Panc1 (cell line): ENCODE measurements at regions of chr10 and their contacts with region 1.

Region 1: DNA sequence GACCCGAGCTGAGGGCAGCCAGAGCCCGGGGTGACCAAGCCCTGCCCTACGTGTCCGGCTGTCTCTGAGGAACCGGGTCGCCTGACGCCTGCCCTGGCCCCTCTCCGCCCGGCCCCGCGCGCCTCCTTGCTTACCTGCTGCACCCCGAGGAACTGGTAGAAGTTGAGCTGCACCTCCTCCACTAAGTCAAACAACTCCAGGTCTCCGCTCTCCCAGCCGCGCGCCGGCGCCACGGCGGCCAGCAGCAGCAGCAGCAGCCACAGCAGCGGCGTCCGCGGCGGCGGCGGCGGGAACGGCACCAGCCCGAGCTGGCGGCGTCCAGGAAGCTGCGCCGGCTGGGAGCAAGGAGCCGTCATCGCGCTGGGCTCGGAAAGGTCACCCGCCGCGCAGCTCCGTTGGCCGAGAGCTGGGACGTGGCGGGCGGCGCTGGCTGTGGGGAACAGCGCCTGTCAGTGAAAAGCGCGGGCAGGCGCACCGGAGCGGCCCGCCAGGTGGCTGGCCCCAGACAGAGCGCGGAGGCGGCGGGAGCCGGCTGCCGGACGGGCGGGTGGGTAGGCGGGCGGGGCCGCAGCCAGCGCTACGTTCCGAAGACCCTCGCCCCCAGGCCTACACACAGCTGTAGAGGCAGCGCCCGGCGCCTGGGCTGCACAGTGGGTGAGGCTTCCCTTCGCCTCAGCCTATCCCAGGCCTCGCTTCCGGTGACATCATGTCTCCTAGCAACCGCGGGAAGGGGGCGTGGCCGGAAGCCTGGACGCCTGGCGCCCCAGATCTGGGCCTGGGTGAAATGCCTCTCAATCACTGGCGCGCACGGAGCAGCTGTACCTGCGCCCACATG is at the start of gene DNAJC1:
- DNase-seq: no peak
- ATAC-seq: peak; percentile 100
- H3K4me3 ChIP-seq: peak within 1 kb of the TSS; percentile 76 to 78
- H3K27ac ChIP-seq: peak within 1 kb of the TSS; percentile 89
- H3K4me1 ChIP-seq: peaks cover 6% of the 10 kb centered on the region; the same call in 1 of the 2 replicates
- H3K27me3 ChIP-seq: no peaks in the 10 kb centered on the region
- CTCF ChIP-seq: peak; percentile 9; the same call in 1 of the 2 replicates
- total RNA-seq, gene DNAJC1: 12.9 TPM

Region 2: DNA sequence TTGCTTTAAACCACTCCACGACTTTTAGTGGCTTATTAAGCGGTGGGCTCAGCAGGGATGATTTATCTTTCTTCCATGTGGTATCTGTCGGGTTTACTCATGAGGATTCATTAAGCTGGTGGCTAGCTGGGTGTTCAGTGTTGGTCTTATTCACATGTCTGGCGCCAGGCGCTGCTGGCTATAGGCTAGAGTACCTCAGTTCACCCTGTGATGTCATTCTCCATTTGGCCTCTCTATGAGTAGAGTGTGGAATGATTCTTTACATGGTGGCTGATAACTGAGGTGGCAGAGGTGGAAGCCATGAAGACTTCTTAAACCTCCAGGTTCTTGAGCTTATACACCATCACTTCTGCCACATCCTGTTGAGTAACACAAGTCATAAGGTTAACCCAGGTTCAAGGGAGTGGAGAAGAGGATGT is 353.8 kb before region 1 on chr10:
- CTCF ChIA-PET with region 1: no interaction called
- POLR2A ChIA-PET with region 1: no interaction called
- in situ Hi-C with region 1: no loop called
- intact Hi-C with region 1: no loop called
- DNase-seq: no peak
- ATAC-seq: no peak
- H3K4me3 ChIP-seq: no peak overlapping the region
- H3K27ac ChIP-seq: no peak overlapping the region
- H3K4me1 ChIP-seq: no peaks in the 10 kb centered on the region
- H3K27me3 ChIP-seq: no peaks in the 10 kb centered on the region
- CTCF ChIP-seq: no peak

Region 3: DNA sequence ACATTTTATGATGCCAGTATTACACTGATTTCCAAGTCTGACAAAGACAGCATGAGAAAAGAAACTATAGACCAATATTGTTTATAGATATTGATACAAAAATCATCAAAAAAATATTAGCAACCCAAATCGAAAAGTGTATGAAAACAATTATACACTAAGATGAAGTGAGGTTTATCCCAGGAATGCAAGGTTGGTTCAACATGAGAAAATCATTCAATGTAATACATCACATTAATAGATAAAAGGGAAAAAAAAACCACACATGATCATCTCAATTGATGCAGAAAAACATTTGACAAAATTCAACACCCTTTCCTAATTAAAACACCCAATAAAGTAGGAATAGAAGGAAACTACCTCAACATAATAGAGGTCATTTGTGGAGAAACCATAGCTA is 153.7 kb before region 1 on chr10:
- CTCF ChIA-PET with region 1: no interaction called
- POLR2A ChIA-PET with region 1: no interaction called
- in situ Hi-C with region 1: no loop called
- intact Hi-C with region 1: no loop called
- DNase-seq: no peak
- ATAC-seq: no peak
- H3K4me3 ChIP-seq: no peak overlapping the region
- H3K27ac ChIP-seq: no peak overlapping the region
- H3K4me1 ChIP-seq: no peaks in the 10 kb centered on the region
- H3K27me3 ChIP-seq: no peaks in the 10 kb centered on the region
- CTCF ChIP-seq: no peak

Region 4: GRCh38 chr10:21943633-21944265 is 59.5 kb before region 1 on chr10:
- CTCF ChIA-PET with region 1: no interaction called
- POLR2A ChIA-PET with region 1: interaction called, 13 read pairs
- in situ Hi-C with region 1: no loop called
- intact Hi-C with region 1: no loop called
- DNase-seq: no peak
- ATAC-seq: no peak
- H3K4me3 ChIP-seq: no peak overlapping the region
- H3K27ac ChIP-seq: no peak overlapping the region; the same call in 1 of the 2 replicates
- H3K4me1 ChIP-seq: peaks cover 6% of the 10 kb centered on the region; the same call in 1 of the 2 replicates
- H3K27me3 ChIP-seq: no peaks in the 10 kb centered on the region
- CTCF ChIP-seq: no peak

Region 5: DNA sequence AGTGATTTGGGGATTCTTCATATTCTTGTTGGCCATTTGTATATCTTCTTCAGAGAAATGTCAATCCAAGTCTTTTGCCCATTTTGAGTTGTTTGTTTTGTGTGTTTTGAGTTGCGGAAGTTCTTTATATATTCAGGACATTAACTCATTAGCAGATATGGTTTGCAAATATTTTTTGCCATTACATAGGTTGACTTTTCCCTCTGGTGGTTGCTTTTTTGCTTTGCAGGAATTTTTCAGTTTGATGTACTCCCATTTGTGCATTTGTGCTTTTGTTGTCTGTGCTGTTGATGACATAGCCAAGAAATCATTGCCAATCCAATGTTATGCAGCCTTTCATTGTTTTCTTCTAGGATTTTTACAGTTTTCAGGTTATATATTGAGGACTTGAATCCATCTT is 63.8 kb after region 1 on chr10:
- CTCF ChIA-PET with region 1: no interaction called
- POLR2A ChIA-PET with region 1: no interaction called
- in situ Hi-C with region 1: no loop called
- intact Hi-C with region 1: no loop called
- DNase-seq: no peak
- ATAC-seq: no peak
- H3K4me3 ChIP-seq: no peak overlapping the region
- H3K27ac ChIP-seq: no peak overlapping the region
- H3K4me1 ChIP-seq: no peaks in the 10 kb centered on the region
- H3K27me3 ChIP-seq: no peaks in the 10 kb centered on the region
- CTCF ChIP-seq: no peak

Region 6: GRCh38 chr10:22183771-22184461 is 180.6 kb after region 1 on chr10:
- CTCF ChIA-PET with region 1: no interaction called
- POLR2A ChIA-PET with region 1: no interaction called
- in situ Hi-C with region 1: no loop called
- intact Hi-C with region 1: no loop called
- DNase-seq: no peak
- ATAC-seq: no peak
- H3K4me3 ChIP-seq: no peak overlapping the region
- H3K27ac ChIP-seq: no peak overlapping the region
- H3K4me1 ChIP-seq: no peaks in the 10 kb centered on the region
- H3K27me3 ChIP-seq: no peaks in the 10 kb centered on the region
- CTCF ChIP-seq: no peak

Region 7: DNA sequence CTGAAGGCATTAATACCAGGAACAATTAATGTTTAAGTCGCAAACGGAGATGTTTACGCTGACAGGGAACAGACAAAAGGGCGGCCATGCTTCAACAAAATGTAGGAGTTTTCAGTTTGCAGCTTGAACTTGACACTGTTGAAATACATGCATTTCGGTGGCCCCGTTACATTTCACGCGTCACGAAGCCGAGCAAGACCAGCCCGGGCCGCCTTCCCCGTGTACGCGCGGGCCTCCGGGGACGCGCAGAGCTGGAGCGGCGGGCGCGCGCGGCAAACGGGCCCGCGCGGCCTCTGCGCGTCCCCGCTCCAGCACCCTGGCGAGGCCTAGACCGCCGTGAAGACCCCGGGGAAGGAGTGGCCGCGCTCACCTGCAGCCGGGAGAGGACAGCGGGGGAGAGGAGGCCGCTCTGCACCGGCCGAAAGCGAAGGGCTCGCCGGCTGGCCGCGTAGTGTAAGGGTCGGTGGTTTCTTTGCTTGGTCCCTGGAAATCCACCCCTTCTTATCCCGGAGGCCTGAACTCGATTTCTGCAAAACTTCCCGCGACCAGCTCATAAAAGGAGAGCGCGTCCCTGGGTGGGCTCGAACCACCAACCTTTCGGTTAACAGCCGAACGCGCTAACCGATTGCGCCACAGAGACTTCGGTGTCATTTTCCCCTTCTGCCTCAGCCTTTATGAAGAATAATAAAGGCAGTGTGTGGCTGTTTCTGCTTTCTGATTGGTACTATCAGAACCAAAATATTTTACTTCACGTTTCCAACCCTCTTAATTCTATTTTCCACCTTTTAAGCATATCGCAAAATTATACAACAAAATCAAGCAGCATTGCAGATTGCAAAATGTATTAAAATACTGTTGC is 225.9 kb after region 1 on chr10:
- CTCF ChIA-PET with region 1: no interaction called
- POLR2A ChIA-PET with region 1: interaction called, 3 read pairs
- in situ Hi-C with region 1: no loop called
- intact Hi-C with region 1: loop called (anchors 10 kb)
- DNase-seq: peak; percentile 72
- ATAC-seq: peak; percentile 97
- H3K4me3 ChIP-seq: peak overlapping the region; percentile 66 to 76
- H3K27ac ChIP-seq: no peak overlapping the region
- H3K4me1 ChIP-seq: no peaks in the 10 kb centered on the region
- H3K27me3 ChIP-seq: no peaks in the 10 kb centered on the region
- CTCF ChIP-seq: no peak

Region 8: DNA sequence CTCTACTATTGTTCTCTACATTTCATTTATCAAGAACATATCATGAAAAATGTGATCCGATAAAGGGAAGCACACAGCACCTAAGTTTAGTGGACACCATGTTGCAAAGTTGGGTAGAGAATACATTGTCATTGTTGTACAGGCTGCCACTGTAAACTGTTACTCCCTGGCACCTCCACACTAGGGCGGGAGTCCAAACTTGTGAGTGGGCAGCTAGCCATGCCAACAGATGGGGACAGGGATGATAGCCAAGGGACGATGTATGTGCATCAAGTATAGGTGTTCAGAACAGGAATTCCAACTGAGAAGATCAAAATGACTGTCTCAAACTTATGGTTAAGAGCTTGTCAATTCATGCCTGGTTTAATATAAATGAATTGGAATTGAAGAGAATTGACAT is 281.8 kb after region 1 on chr10:
- CTCF ChIA-PET with region 1: no interaction called
- POLR2A ChIA-PET with region 1: interaction called, 13 read pairs
- in situ Hi-C with region 1: no loop called
- intact Hi-C with region 1: no loop called
- DNase-seq: no peak
- ATAC-seq: no peak
- H3K4me3 ChIP-seq: no peak overlapping the region
- H3K27ac ChIP-seq: no peak overlapping the region
- H3K4me1 ChIP-seq: no peaks in the 10 kb centered on the region
- H3K27me3 ChIP-seq: no peaks in the 10 kb centered on the region
- CTCF ChIP-seq: no peak